ENCODE measurements at regions of chr3 and their contacts with region 1.

Region 1: DNA sequence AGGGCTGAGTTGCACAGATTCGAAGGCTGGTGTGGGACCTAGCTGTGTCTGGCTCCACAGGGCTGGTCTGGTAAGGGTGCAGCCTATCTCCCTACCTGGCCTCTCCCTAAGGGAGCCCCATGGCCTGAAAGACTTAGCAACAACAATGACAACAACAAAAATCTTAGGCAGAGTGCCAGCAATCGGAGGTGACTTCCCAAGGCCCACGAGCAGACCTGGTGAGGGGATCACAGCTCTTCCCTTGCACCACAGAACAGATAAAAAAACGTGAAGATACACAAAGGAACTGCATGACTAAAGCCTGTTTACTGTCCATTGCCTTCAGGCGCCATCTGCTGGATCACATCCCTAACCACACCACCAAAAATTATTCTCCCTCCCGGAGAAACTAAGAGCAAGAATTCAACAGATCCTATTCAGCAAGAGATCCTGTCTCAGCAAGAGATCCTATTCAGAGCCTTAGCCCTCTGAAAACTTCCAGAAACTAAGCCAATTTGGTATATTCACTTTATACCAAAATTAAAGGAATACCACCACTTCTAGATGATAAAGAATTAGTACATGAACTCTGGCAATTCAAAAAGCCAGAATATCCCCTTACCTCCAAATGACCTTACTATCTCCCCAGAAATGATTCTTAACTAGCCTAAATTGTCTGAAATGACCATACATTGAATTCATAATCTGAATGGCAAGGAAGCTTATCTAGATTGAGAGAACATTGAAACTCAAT is 24.1 kb upstream of the OR5K4 start:
- DNase-seq: peak; percentile 72

Region 2: GRCh38 chr3:97821810-97822775 is 507.5 kb before region 1 on chr3 and contains the start of gene CRYBG3:
- in situ Hi-C with region 1: no loop called
- DNase-seq: peak; percentile 89

Region 3: DNA sequence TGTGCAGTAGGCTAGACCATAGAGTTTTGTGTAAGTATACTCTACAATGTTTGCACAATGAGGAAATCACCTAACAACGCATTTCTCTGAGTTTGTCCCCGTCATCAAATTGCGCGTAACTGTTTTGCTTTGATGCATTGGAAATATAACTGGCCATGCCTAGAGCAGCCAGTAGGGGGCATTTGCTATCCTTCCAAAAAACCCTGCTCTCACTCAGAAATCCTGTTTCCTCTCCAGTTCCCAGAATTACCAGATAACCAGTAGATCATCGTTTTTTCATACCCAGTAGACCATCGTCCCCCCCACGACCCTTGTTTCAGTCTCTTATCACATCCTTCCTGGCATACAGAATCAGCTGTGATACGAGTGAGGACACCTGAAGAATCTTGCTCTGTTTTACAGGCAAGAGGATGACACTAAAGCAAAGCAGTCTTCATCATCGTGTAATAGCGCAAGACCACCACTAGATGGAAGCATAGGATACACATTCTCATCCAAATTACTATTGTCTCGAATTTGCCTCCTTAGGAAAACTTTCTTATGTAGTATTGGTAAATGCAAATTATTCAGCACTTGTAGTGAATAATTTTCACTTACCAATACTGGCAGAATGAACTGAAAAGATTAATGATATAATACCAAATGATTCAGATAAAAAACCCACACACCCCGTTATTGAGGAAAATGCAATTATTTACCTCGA is 290.1 kb before region 1 on chr3:
- in situ Hi-C with region 1: loop called (anchors 25 kb)
- DNase-seq: peak; percentile 95

Region 4: DNA sequence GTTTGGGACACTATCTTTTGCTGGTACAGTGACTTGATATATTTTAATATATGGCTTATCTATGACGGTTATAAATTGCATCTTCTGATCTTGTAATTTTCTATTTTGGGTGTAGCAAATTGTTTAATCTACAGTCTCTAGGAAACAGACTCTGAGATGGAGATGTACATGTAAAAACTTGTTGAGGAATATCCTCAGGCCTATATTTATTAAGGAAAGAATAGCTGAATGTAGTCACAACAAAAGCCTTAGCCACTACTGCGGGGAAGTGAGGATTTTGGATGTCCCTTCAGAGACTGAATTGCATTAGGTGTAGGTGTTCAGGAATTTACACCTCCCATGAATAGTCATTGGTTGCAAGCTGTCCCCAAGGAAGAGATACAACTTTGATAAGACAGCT is 47.1 kb after region 1 on chr3:
- in situ Hi-C with region 1: no loop called
- DNase-seq: no peak

Region 5: DNA sequence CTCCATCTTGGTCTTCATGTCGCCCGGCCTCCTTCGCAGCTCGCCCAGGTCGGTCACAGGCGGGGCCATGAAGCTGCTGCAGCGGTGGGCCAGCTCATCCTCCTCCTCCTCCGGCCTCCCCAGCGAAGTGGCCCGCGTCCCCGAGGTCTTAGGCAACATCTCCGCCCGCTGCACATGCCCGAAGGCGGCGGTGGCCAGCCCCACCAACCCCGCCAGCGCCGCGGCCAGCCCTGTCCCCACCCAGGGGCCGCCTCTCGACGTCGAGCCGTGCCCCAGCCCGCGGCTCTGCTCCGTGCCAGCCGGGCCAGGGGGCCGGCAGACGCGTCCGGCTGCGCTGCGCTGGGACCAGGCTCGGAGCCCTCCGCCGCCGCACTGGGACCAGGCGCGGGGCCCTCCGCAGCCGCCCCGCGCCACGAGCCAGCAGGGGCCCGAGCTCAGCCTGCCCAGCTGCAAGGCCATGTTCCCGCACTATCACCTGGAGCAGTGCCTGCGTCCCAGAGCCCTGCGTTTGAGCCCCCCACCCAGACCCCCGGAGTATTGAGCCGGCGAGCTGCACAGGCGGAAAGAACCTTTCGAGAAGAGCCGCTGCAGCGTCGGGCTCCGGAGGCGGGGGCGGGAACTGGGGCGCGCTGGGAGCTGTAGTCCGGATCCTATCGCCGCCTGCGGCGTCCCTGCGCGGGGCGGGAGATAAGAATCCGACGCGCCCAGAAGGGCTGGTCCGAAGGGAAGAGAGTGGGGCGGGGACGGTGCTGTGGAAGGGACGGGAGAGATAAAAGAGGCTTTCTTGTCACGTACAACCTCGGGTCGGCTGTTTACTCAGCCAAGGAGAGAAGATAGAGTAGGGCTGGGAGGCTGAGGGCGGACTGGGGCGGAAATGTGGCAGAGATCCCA is 263.7 kb after region 1 on chr3 and contains the start of gene CPOX:
- in situ Hi-C with region 1: loop called (anchors 25 kb)
- DNase-seq: peak; percentile 95

Measured in KBM-7 (cell line).